Activated B cell treated with CpG ODN at 0.5 μM for 24 hours (primary cell): ENCODE measurements at regions of chr2 and their contacts with region 1.

Region 1: GRCh38 chr2:217510771-217511291 is 492.0 kb downstream of the TNS1 start:
- DNase-seq: no peak
- ATAC-seq: peak; percentile 54
- H3K4me3 Mint-ChIP-seq: no peak overlapping the region
- H3K27ac Mint-ChIP-seq: no peak overlapping the region
- H3K4me1 Mint-ChIP-seq: no peaks in the 10 kb centered on the region
- H3K27me3 Mint-ChIP-seq: peaks cover 14% of the 10 kb centered on the region
- CTCF ChIP-seq: no peak

Region 2: GRCh38 chr2:216519154-216519762 is 991.6 kb before region 1 on chr2:
- CTCF ChIA-PET with region 1: interaction called, 5 read pairs
- POLR2A ChIA-PET with region 1: no interaction called
- intact Hi-C with region 1: loop called (anchors 2 kb)
- DNase-seq: no peak
- ATAC-seq: peak; percentile 56
- H3K4me3 Mint-ChIP-seq: no peak overlapping the region
- H3K27ac Mint-ChIP-seq: no peak overlapping the region
- H3K4me1 Mint-ChIP-seq: no peaks in the 10 kb centered on the region
- H3K27me3 Mint-ChIP-seq: no peaks in the 10 kb centered on the region
- CTCF ChIP-seq: no peak

Region 3: GRCh38 chr2:216680951-216681629 is 829.7 kb before region 1 on chr2:
- CTCF ChIA-PET with region 1: interaction called, 11 read pairs
- POLR2A ChIA-PET with region 1: no interaction called
- intact Hi-C with region 1: no loop called
- DNase-seq: no peak
- ATAC-seq: no peak
- H3K4me3 Mint-ChIP-seq: no peak overlapping the region
- H3K27ac Mint-ChIP-seq: no peak overlapping the region
- H3K4me1 Mint-ChIP-seq: no peaks in the 10 kb centered on the region
- H3K27me3 Mint-ChIP-seq: peaks cover 40% of the 10 kb centered on the region
- CTCF ChIP-seq: no peak

Region 4: DNA sequence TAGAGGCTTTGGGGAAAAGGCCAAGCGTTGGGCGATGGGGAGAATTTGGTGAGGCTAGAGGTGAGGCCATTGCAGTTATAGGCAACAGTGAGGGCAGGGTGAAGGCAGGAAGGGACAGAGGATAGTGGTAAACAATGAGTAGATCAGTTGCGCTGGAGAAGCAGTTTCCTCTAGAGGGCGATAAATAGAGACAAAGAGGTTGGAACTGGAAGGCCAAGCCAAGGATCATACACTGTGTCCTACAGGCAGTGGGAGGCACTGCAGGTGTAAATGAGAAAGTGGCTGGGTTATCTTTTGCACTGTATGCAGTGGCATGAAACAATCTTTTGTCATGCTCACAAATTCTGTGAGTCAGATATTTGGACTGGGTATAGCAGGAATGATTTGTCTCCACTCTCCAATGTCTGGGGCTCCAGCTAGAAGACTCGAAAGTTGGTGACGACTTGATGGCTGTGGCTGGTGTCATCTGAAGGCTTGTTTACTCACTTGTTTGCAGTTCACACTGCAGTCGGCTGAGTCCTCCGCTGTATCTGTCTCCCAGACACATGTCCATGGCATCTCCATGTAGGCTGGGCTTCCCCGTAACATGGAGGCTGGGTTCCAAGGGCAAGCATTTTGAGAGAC is 733.1 kb before region 1 on chr2:
- CTCF ChIA-PET with region 1: no interaction called
- POLR2A ChIA-PET with region 1: no interaction called
- intact Hi-C with region 1: loop called (anchors 2 kb)
- DNase-seq: no peak
- ATAC-seq: peak; percentile 50
- H3K4me3 Mint-ChIP-seq: no peak overlapping the region
- H3K27ac Mint-ChIP-seq: no peak overlapping the region
- H3K4me1 Mint-ChIP-seq: no peaks in the 10 kb centered on the region
- H3K27me3 Mint-ChIP-seq: peaks cover 8% of the 10 kb centered on the region
- CTCF ChIP-seq: no peak

Region 5: GRCh38 chr2:217434181-217434975 is 76.5 kb before region 1 on chr2:
- CTCF ChIA-PET with region 1: no interaction called
- POLR2A ChIA-PET with region 1: no interaction called
- intact Hi-C with region 1: no loop called
- DNase-seq: no peak
- ATAC-seq: peak; percentile 57
- H3K4me3 Mint-ChIP-seq: no peak overlapping the region
- H3K27ac Mint-ChIP-seq: no peak overlapping the region
- H3K4me1 Mint-ChIP-seq: peaks cover 11% of the 10 kb centered on the region
- H3K27me3 Mint-ChIP-seq: no peaks in the 10 kb centered on the region
- CTCF ChIP-seq: no peak

Region 6: GRCh38 chr2:217489145-217489960 is 21.5 kb before region 1 on chr2:
- CTCF ChIA-PET with region 1: no interaction called
- POLR2A ChIA-PET with region 1: no interaction called
- intact Hi-C with region 1: no loop called
- DNase-seq: no peak
- ATAC-seq: no peak
- H3K4me3 Mint-ChIP-seq: no peak overlapping the region
- H3K27ac Mint-ChIP-seq: no peak overlapping the region
- H3K4me1 Mint-ChIP-seq: no peaks in the 10 kb centered on the region
- H3K27me3 Mint-ChIP-seq: peaks cover 4% of the 10 kb centered on the region
- CTCF ChIP-seq: no peak

Region 7: GRCh38 chr2:217573571-217573970 is 62.7 kb after region 1 on chr2:
- CTCF ChIA-PET with region 1: no interaction called
- POLR2A ChIA-PET with region 1: no interaction called
- intact Hi-C with region 1: no loop called
- DNase-seq: no peak
- ATAC-seq: no peak
- H3K4me3 Mint-ChIP-seq: no peak overlapping the region
- H3K27ac Mint-ChIP-seq: no peak overlapping the region
- H3K4me1 Mint-ChIP-seq: no peaks in the 10 kb centered on the region
- H3K27me3 Mint-ChIP-seq: peaks cover 6% of the 10 kb centered on the region
- CTCF ChIP-seq: no peak